Naive thymus-derived CD4-positive, alpha-beta T cell (primary cell): ENCODE measurements at regions of chr11 and their contacts with region 1.

Region 1: DNA sequence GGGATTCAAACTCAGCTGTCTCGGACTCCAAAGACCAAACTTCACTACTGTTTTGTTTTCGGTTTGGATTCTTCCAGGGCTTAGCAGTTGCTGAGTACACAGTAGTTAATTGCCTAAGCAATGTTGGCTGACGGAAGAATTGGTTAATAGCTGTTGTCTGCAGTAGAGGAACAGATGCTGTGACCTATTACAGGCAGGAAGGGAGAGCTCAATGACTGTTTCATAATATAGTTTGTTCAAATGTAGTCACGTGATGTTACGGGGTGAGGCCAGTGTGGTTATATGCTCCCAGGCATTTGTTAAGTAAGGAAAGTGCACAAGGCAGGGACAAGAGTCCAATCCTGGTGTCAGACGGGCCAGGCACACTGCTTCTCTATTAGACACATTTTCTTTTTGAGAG is 222.6 kb upstream of the CCDC90B start:
- DNase-seq: no peak
- ATAC-seq: no peak
- H3K4me3 ChIP-seq: no peak overlapping the region
- H3K4me3 Mint-ChIP-seq: no peak overlapping the region
- H3K27ac ChIP-seq: no peak overlapping the region
- H3K27ac Mint-ChIP-seq: no peak overlapping the region
- H3K4me1 ChIP-seq: no peaks in the 10 kb centered on the region
- H3K4me1 Mint-ChIP-seq: no peaks in the 10 kb centered on the region
- H3K27me3 ChIP-seq: no peaks in the 10 kb centered on the region
- H3K27me3 Mint-ChIP-seq: peaks cover 0 to 12% (median 3%) of the 10 kb centered on the region in 5 donors

Region 2: DNA sequence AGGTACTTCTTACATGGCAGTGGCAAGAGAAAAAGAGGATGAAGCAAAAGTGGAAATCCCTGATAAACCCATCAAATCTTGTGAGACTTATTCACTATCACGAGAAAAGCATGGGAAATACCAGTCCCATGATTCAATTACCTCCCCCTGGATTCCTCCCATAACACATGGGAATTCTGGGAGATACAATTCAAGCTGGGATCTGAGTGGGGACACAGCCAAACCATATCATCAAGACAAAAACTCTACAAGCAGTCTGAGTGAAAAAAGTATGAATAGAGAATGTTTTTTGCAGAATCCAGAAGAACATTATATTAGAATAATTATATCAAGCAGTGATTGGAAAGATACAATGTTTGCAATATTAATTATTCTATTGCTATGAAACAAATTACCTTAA is 1668.8 kb before region 1 on chr11:
- CTCF ChIA-PET with region 1: no interaction called
- POLR2A ChIA-PET with region 1: no interaction called
- intact Hi-C with region 1: loop called in 1 of 2 experiments (anchors 10 kb)
- DNase-seq: no peak
- ATAC-seq: no peak
- H3K4me3 ChIP-seq: no peak overlapping the region
- H3K4me3 Mint-ChIP-seq: no peak overlapping the region
- H3K27ac ChIP-seq: no peak overlapping the region
- H3K27ac Mint-ChIP-seq: no peak overlapping the region
- H3K4me1 ChIP-seq: no peaks in the 10 kb centered on the region
- H3K4me1 Mint-ChIP-seq: peaks cover 0 to 17% (median 6%) of the 10 kb centered on the region in 7 donors
- H3K27me3 ChIP-seq: no peaks in the 10 kb centered on the region
- H3K27me3 Mint-ChIP-seq: no peaks in the 10 kb centered on the region

Region 3: DNA sequence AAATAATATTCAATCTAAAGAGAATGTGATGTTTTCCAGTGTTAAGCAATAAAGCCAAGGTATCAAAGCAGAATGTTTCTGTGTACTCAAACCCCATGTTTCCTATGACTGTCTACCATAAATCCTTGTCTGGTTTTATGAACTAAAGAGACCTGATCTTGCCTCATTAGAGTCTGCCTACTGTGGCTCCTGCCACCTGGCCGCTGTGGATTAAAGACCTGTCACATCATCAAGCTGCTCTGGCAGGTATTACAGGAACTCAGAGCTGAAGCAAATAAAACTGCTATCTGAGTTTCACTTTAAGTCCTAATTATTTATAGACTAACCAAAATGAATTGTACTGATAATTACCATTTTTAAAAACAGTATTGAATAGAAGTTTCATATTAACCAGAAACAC is 14.9 kb before region 1 on chr11:
- CTCF ChIA-PET with region 1: no interaction called
- POLR2A ChIA-PET with region 1: no interaction called
- intact Hi-C with region 1: no loop called
- DNase-seq: no peak
- ATAC-seq: no peak
- H3K4me3 ChIP-seq: no peak overlapping the region
- H3K4me3 Mint-ChIP-seq: no peak overlapping the region
- H3K27ac ChIP-seq: no peak overlapping the region
- H3K27ac Mint-ChIP-seq: no peak overlapping the region
- H3K4me1 ChIP-seq: no peaks in the 10 kb centered on the region
- H3K4me1 Mint-ChIP-seq: no peaks in the 10 kb centered on the region
- H3K27me3 ChIP-seq: no peaks in the 10 kb centered on the region
- H3K27me3 Mint-ChIP-seq: peaks cover 4 to 24% (median 17%) of the 10 kb centered on the region in 5 donors